ENCODE measurements at regions of chr3 and their contacts with region 1.

Region 1: DNA sequence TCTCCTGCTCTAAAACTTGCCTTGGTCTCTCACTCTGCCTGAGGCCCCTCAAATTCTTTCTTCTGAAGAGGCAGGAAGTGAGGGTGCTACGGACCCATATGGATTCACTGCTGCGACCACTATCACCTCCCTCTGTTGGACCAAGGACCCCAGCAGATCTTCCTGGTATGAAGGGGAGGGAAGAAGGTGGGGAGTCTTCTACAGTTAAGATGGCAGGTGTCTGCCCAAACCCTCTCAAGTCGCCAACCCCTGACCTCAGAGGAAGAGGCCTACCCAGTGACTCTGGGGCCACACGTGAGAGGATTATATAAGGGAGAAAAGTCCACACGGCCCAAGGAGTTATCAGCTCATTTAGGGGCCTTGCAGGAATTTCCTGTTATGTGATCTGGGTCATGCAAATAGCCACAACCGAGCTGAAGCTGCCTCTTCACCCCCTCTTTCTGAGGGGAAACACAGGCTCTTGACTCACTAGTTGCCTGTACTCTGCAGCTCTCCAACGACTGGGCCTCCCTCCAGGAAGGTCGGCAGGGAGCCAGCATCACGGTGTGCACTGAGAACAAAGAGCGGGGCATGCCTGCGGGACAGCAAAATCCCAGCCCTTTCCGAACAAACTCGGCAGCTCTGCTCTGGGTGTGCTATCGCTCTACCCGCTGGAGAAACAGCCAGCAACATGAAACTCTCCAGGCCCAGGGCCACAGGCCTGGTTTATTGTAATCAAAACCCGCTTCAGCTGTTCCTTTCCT is 116.0 kb downstream of the XXYLT1 start:
- DNase-seq: peak; percentile 82 to 91
- ATAC-seq: peak; percentile 62
- H3K4me3 ChIP-seq: no peak overlapping the region
- H3K27ac ChIP-seq: no peak overlapping the region
- H3K4me1 ChIP-seq: no peaks in the 10 kb centered on the region
- H3K27me3 ChIP-seq: no peaks in the 10 kb centered on the region

Region 2: GRCh38 chr3:194952841-194953241 is 202.1 kb before region 1 on chr3:
- intact Hi-C with region 1: no loop called
- DNase-seq: no peak
- ATAC-seq: no peak
- H3K4me3 ChIP-seq: no peak overlapping the region
- H3K27ac ChIP-seq: no peak overlapping the region
- H3K4me1 ChIP-seq: no peaks in the 10 kb centered on the region
- H3K27me3 ChIP-seq: no peaks in the 10 kb centered on the region

Region 3: GRCh38 chr3:195221015-195221853 is 66.3 kb after region 1 on chr3:
- intact Hi-C with region 1: loop called in 1 of 2 experiments (anchors 5 kb)
- DNase-seq: peak; percentile 86 to 87
- ATAC-seq: peak; percentile 83
- H3K4me3 ChIP-seq: no peak overlapping the region
- H3K27ac ChIP-seq: peak overlapping the region; percentile 45 to 80
- H3K4me1 ChIP-seq: no peaks in the 10 kb centered on the region
- H3K27me3 ChIP-seq: no peaks in the 10 kb centered on the region

Region 4: GRCh38 chr3:195240171-195240748 is 85.3 kb after region 1 on chr3:
- intact Hi-C with region 1: loop called in 1 of 2 experiments (anchors 5 kb)
- DNase-seq: peak; percentile 78 to 87
- ATAC-seq: peak; percentile 87
- H3K4me3 ChIP-seq: no peak overlapping the region
- H3K27ac ChIP-seq: peak overlapping the region in 1 of 2 donors; percentile 48
- H3K4me1 ChIP-seq: no peaks in the 10 kb centered on the region
- H3K27me3 ChIP-seq: no peaks in the 10 kb centered on the region

Region 5: DNA sequence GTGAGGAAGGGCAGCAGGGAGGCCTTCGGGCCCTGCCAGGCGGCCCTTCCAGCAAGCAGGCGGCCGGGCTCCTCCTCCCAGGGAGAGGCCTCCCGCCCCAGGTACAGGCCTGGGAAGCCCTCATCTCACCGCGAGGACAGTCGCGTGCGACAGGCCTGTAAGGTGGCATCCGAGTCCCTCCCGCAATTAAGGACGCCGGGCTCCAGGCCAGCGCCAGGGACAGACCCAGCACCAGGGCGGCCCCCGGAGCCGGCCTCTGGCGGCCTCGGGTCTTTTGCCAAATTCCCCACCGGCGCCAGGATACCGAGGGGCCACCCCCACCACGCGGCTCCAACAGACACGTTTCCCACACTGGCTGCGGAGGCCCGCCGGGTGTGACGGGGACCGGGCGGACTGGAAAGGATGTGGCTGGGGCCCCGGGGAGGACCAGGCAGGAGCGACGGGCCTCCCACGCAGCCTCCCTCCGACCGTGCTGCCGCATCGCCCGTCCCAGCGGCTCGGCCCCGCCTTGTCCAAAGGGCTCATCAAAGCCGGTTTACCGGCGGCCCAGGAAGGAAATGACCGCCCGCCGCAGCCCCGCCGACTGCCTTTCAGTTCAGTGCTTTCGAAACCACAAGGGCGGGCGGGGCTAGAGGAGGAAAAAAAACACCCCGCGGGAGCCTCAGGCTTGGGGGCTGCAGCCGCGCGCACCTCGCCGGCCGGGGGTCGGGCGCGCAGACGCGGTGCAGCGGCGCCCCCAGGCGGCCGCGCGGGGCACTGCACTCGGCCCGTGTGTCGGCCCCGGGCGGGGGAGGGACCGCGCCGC is 104.7 kb after region 1 on chr3:
- intact Hi-C with region 1: loop called in 1 of 2 experiments (anchors 10 kb)
- DNase-seq: peak; percentile 92 to 94
- ATAC-seq: peak; percentile 92
- H3K4me3 ChIP-seq: peak overlapping the region; percentile 53 to 58
- H3K27ac ChIP-seq: peak overlapping the region in 1 of 2 donors; percentile 43
- H3K4me1 ChIP-seq: no peaks in the 10 kb centered on the region
- H3K27me3 ChIP-seq: no peaks in the 10 kb centered on the region

Region 6: DNA sequence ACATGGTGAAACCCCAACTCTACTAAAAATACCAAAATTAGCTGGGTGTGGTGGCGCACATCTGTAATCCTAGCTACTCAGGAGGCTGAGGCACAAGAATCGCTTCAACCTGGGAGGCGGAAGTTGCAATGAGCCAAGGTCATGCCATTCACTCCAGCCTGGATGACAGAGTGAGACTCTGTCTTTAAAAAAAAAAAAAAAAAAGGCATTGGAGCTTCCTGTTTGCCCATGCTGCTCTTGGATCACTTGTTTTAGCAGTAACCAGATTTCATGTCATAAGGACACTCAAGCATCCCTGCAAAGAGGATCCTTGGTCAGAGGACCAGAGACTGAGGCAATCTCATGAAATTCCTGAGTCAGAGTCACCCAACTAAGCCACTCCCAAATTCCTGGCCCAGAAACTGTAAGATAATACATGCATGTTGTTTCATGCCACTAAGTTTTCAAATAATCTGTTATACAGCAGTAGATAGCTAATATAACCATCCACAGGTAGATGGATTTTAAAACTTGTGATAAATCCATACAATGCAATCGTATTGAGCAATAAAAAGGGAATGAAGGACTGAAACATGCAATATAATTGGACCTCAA is 198.0 kb after region 1 on chr3:
- intact Hi-C with region 1: no loop called
- DNase-seq: no peak
- ATAC-seq: no peak
- H3K4me3 ChIP-seq: no peak overlapping the region
- H3K27ac ChIP-seq: no peak overlapping the region
- H3K4me1 ChIP-seq: no peaks in the 10 kb centered on the region
- H3K27me3 ChIP-seq: no peaks in the 10 kb centered on the region

Region 7: GRCh38 chr3:195458316-195458717 is 303.4 kb after region 1 on chr3:
- intact Hi-C with region 1: no loop called
- DNase-seq: no peak
- ATAC-seq: no peak
- H3K4me3 ChIP-seq: no peak overlapping the region
- H3K27ac ChIP-seq: no peak overlapping the region
- H3K4me1 ChIP-seq: no peaks in the 10 kb centered on the region
- H3K27me3 ChIP-seq: no peaks in the 10 kb centered on the region

Measured in aorta (tissue), 5 donors.